Posterior cingulate gyrus (tissue), 11 donors: ENCODE measurements at regions of chr14 and their contacts with region 1.

Region 1: DNA sequence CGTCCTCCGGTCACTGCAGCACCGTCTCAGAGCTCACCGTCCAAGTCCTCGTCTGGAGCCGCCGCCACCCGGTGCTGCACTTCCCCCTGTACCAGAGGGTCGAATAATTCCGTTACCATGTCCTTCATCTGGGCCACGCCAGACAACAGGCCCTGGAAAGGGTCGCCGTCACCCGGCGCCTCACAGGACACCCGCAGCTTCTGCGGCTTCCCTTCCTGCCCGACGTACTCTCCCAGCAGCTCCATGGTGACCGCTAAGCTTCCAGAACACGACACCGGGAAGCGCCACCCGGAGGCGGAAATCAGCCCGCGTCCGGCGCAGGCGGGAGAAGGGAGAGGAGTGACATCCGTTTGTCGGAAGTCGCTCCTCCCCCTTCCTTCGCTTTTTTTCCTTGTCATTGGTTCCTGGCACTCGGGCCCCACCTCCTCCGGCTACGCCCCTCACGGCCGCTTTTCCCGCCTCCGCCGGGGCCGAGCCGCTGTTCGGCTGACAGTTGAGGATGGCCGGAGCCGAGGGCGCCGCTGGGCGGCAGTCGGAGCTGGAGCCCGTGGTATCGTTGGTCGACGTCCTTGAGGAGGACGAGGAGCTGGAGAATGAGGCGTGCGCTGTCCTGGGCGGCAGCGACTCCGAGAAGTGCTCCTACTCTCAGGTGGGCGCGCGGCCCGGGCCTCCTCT is at the starts of genes GON7 and UBR7:
- DNase-seq: peak; percentile 92 to 100 (median 96)

Region 2: GRCh38 chr14:92450351-92451070 is 756.4 kb before region 1 on chr14:
- intact Hi-C with region 1: no loop called
- DNase-seq: peak in 1 of 10 donors; percentile 52

Region 3: DNA sequence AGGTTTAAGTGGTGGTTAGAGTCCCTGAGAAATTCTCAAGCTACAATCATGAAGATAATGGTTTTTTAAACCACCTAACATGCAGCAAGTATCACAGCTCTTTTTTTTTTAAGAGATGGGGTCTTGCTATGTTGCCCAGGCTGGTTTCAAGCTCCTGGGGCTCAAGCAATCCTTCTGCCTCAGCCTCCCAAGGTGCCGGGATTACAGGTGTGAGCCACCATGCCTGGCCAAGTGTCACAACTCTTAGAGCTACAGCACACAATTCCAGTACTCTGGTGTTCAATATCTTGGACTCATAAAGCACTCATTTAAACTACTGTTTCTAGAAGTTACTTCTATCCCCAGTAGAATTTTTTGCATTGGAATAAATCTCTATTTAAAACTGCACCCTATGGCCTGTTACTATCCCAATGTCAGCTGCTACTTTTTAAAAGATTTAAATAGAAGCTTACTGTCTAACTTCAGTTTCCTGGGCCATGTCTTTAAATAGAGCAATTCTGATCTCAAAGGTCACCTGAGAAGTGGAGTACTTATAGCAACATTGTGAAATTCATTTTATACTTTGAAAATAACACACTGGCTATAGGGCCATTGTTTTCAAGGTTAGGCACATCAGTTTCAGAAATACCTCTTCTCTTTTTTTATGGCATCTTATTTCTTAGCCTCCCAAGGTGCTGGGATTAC is 11.5 kb before region 1 on chr14:
- intact Hi-C with region 1: no loop called
- DNase-seq: no peak

Region 4: DNA sequence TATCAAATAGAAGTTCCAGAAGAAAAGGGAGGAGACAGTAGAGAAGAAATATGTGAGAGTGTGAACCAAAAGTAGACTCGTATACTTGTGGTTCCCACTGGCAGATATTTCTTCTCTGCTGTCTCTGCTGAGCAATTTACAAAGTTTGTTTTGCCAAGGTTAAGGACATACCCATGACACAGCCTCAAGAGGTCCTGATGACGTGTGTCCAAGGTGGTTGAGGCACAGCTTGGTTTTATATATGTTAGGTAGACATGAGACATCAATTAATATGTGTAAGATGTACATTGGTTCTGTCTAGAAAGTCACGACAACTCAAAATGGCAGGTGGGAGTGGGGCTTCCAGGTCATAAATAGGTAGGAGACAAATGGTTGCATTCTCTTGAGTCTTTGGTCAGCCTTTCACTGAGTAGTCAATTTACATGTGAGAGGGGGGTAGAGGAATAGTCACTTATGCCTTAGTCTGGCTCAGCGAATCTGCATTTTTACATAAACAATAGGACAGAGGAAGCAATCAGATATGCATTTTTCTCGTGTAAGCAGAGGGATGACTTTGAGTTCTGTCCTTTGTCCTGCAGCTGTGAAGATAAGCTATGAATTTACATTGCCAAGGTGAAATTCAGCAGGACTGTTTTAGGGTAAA is 195.9 kb after region 1 on chr14:
- intact Hi-C with region 1: no loop called
- DNase-seq: no peak

Region 5: GRCh38 chr14:93431036-93431670 is 224.2 kb after region 1 on chr14:
- intact Hi-C with region 1: loop called (anchors 5 kb)
- DNase-seq: peak; percentile 58 to 97 (median 84)

Region 6: DNA sequence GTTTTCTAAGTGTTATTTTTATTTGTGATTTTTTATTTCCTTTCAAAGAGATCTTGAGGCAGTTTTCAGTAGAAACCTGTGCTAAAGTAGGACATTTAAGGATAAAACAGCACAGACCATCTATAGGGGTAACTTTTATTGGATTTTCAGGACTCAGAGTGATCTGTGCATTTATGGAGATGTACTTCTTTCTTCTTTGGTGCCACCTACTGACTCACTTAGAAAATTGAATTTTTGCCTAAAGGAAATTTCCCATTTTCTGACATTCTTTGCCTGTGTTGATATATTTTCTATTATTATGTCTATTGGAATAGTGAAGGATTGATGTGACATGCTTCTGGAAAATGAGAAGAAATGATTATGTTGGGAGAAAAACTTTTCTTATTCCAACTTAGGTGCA is 336.8 kb after region 1 on chr14:
- intact Hi-C with region 1: loop called (anchors 2 kb)
- DNase-seq: no peak